ENCODE measurements at regions of chr22 and their contacts with region 1.

Region 1: DNA sequence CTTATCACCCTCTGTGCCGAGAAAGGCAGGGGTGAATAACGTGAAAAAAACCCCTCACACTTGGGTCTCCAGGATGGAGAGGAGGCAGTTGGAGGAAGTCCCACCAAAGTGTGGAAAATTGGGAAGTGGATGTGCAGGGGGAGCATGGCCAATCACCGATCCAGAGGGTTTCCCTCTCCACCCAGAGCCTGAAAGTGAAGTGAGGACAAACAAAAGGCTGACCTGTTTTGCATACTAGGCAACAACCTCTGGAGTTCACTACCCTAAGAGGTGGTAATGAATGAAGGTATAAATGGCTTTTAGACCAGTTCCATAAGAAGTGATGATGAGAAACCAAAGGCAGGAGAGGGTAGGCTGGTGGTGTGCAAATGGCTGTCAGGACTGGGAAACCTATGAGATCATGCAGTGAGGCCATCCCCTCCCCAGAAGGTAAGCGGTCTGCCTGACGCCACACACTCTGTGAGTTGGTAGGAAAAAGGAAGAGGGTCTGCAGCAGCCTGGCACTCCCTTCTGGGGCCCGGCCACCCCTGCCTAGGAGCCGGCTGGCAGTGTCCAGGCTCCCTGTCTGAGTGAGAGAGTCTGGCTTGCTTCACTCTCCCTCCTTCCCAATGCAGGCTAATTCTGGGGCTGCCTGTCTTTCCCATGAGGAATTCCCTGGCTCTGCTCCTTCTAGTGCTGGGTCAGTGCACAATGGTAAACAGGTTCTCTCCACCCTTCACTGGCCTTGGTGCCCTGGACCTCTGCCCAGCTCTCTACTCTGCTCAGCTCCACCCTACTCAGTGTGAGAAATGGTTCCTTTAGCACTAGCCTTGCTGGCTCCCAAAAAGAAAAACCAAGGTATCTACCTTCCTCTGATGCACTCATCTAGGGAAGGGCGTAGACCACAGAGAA is 15.6 kb downstream of the TBC1D10A start:
- DNase-seq: no peak
- ATAC-seq: no peak
- H3K4me3 ChIP-seq: no peak overlapping the region
- H3K4me3 Mint-ChIP-seq: peak overlapping the region; percentile 18
- H3K27ac ChIP-seq: peak overlapping the region; percentile 62 to 86
- H3K27ac Mint-ChIP-seq: peak overlapping the region; percentile 83
- H3K4me1 ChIP-seq: peaks cover 95% of the 10 kb centered on the region
- H3K4me1 Mint-ChIP-seq: peaks cover 94% of the 10 kb centered on the region
- H3K27me3 ChIP-seq: no peaks in the 10 kb centered on the region
- H3K27me3 Mint-ChIP-seq: no peaks in the 10 kb centered on the region
- CTCF ChIP-seq: no peak

Region 2: DNA sequence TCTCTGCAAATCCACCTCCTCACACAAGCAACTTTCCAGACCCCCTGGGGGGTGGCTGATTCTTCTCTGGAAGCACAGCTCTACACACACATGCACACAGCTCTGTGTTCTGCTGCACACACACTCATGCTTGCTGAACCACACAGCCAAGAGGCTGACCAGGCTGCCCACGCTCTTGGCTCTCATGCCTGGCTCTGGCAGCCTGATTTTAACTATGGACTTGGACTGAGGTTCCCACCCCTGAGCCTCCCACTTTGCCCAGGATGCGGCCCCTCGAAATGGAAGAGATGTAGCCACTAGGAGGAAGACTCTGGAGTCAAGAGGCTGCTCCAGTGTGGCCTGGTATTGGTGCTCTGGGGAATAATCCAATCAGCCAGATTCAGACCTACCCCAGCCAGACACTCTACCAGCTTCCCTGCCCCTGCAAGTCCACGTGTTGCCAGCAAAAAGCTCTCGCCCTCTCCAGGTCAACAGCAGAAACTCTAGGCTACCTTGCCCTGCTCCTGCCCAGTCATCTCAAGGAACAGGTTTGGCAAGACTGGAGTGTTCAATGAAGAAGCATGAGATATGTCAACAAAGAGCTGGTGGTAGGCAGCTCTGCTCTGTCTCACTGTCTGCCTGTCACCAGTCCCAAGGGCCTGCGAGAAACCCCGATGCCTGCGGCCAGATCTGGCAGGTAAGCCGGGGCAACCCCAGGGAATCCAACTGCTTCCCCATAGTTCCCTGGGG is 13.0 kb before region 1 on chr22:
- CTCF ChIA-PET with region 1: interaction called, 59 read pairs
- POLR2A ChIA-PET with region 1: interaction called, 268 read pairs
- intact Hi-C with region 1: loop called in 1 of 2 experiments (anchors 2 kb)
- DNase-seq: no peak
- ATAC-seq: no peak
- H3K4me3 ChIP-seq: no peak overlapping the region
- H3K4me3 Mint-ChIP-seq: peak overlapping the region; percentile 4
- H3K27ac ChIP-seq: peak overlapping the region; percentile 74 to 86
- H3K27ac Mint-ChIP-seq: peak overlapping the region; percentile 83
- H3K4me1 ChIP-seq: peaks cover 89% of the 10 kb centered on the region
- H3K4me1 Mint-ChIP-seq: peaks cover 83% of the 10 kb centered on the region
- H3K27me3 ChIP-seq: no peaks in the 10 kb centered on the region
- H3K27me3 Mint-ChIP-seq: no peaks in the 10 kb centered on the region
- CTCF ChIP-seq: no peak

Region 3: GRCh38 chr22:30326706-30327362 is 15.7 kb after region 1 on chr22 and contains the start of gene TBC1D10A:
- CTCF ChIA-PET with region 1: interaction called, 6 read pairs
- POLR2A ChIA-PET with region 1: interaction called, 290 read pairs
- intact Hi-C with region 1: loop called (anchors 2 kb)
- DNase-seq: peak; percentile 84 to 98 (median 94)
- ATAC-seq: peak; percentile 89
- H3K4me3 ChIP-seq: peak within 1 kb of the TSS; percentile 71
- H3K4me3 Mint-ChIP-seq: peak within 1 kb of the TSS; percentile 93
- H3K27ac ChIP-seq: peak within 1 kb of the TSS; percentile 63 to 74
- H3K27ac Mint-ChIP-seq: peak within 1 kb of the TSS; percentile 97
- H3K4me1 ChIP-seq: peaks cover 54% of the 10 kb centered on the region
- H3K4me1 Mint-ChIP-seq: peaks cover 51% of the 10 kb centered on the region
- H3K27me3 ChIP-seq: no peaks in the 10 kb centered on the region
- H3K27me3 Mint-ChIP-seq: no peaks in the 10 kb centered on the region
- CTCF ChIP-seq: no peak
- total RNA-seq, gene TBC1D10A: 38.9 to 41.8 TPM

Region 4: GRCh38 chr22:30574997-30575671 is 264.0 kb after region 1 on chr22:
- CTCF ChIA-PET with region 1: no interaction called
- POLR2A ChIA-PET with region 1: no interaction called
- intact Hi-C with region 1: no loop called
- DNase-seq: no peak
- ATAC-seq: no peak
- H3K4me3 ChIP-seq: no peak overlapping the region
- H3K4me3 Mint-ChIP-seq: no peak overlapping the region
- H3K27ac ChIP-seq: no peak overlapping the region
- H3K27ac Mint-ChIP-seq: no peak overlapping the region
- H3K4me1 ChIP-seq: peaks cover 10% of the 10 kb centered on the region
- H3K4me1 Mint-ChIP-seq: peaks cover 3% of the 10 kb centered on the region
- H3K27me3 ChIP-seq: peaks cover 0 to 4% of the 10 kb centered on the region in 2 experiments
- H3K27me3 Mint-ChIP-seq: no peaks in the 10 kb centered on the region
- CTCF ChIP-seq: no peak